K562 (cell line): ENCODE measurements at regions of chr6 and their contacts with region 1.

Region 1: DNA sequence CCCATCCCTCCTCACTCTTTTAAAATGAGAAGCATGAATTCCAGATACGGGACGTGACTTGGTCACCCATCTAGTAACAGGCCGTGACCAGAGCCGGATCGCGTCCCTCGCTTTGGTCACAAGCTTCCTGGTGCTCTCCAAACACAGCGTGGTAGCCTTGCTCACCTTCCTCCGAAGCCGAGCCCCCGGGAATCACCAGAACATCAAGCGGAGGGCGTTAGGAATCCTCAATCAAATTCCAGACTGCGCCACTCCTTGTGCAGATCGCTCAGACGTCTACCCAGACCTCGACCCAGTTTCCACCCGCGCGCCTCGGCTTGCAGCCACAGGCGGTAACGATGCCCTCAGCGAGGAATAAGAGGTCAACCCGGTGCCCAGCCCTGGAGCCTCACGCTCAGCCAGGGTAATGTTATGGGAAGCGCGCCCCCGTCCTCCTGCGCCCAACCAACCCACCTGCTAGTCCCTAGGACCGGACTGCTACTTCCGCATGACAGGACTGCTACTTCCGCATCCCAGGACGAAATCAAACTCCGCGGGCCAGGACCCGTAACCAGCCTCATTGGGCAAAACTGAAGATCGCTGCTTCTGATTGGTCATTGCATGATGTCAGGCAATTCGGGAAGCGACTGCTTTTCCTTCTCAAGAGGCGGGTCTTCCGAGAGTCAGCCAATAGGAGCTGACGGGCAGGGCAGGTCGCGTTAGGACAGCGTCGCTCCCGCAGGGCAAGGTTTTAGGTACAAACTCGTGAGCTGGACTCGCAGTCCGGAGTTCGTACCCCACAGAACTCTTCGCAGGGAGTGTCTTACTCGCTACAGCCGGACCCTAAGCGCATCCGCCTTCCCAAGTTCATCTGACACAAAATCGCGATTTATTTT is at the start of gene MTFR2:
- DNase-seq: peak; percentile 100
- ATAC-seq: peak; percentile 93
- H3K4me3 ChIP-seq: peak within 1 kb of the TSS; percentile 88
- H3K27ac ChIP-seq: peak within 1 kb of the TSS; percentile 82
- H3K4me1 ChIP-seq: peaks cover 0 to 20% of the 10 kb centered on the region in 2 experiments; a peak in 2 of 5 replicates
- H3K27me3 ChIP-seq: no peaks in the 10 kb centered on the region
- CTCF ChIP-seq: no peak
- EP300 ChIP-seq: peak; percentile 45
- POLR2A ChIP-seq: peak; percentile 93
- RAD21 ChIP-seq: 0 out of 4 replicates have a peak, but pooled peaks have one; percentile 9 to 12
- polyA plus RNA-seq, gene MTFR2: 45.9 to 49.7 TPM

Region 2: DNA sequence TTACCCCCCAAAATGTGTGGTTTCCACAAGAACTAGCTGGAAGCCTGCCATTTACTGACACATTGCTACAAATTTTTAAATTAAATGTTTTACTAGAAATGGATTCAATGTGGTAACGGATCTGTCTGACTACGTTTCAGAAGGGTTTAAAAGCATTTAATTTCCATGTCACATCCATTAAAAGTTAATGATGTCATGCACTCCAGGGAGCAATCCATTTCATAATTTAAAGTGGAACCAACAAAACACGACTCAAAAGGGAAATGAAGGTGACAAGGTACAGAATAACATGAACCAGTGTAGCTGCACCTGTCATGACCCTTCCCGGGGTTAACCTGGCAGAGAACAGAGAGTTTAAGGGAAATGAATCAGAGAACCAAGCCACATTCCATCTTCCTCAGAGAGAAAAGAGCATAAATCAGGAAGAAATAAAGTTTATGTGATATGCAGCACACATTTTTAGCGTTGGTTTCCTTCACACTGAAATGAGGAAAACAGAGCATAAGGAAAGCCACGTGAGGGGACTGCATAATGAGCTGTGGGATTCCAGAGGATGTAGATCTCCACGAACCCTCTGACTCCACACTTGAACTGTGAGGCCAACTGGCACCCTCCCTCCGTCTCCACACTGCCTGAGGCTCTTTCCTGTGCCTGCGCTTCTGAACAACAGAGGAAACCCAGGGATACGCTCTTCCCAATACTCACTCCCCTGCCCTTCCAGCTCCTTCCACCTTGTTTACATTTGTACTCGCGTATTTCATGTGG is 582.2 kb before region 1 on chr6:
- CTCF ChIA-PET with region 1: no interaction called
- POLR2A ChIA-PET with region 1: no interaction called
- in situ Hi-C with region 1: no loop called
- intact Hi-C with region 1: no loop called
- DNase-seq: no peak
- ATAC-seq: no peak
- H3K4me3 ChIP-seq: no peak overlapping the region
- H3K27ac ChIP-seq: no peak overlapping the region
- H3K4me1 ChIP-seq: no peaks in the 10 kb centered on the region
- H3K27me3 ChIP-seq: peaks cover 0 to 4% of the 10 kb centered on the region in 2 experiments; a peak in 1 of 5 replicates
- CTCF ChIP-seq: no peak
- EP300 ChIP-seq: no peak
- POLR2A ChIP-seq: no peak
- RAD21 ChIP-seq: no peak

Region 3: DNA sequence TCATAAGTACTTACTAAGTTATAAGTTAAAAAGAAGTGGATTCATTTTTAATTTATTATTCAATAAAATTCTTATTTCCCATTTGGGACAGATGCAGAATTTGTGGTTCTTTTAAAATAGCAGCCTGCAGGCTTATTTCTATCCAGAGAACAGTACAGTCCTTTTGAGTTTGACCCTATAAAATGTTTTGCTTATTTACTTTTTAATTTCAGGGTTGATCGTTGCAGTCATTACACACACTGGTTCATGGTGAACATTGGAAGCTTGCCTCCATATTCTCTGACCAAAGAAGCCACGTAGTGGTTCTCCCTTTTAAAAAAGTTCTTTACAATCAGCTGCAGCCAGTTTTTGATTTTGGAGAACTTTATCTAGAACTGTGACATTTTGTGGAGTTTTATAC is 521.5 kb before region 1 on chr6:
- CTCF ChIA-PET with region 1: no interaction called
- POLR2A ChIA-PET with region 1: no interaction called
- in situ Hi-C with region 1: no loop called
- intact Hi-C with region 1: no loop called
- DNase-seq: no peak
- ATAC-seq: no peak
- H3K4me3 ChIP-seq: no peak overlapping the region
- H3K27ac ChIP-seq: no peak overlapping the region
- H3K4me1 ChIP-seq: no peaks in the 10 kb centered on the region
- H3K27me3 ChIP-seq: no peaks in the 10 kb centered on the region
- CTCF ChIP-seq: no peak
- EP300 ChIP-seq: no peak
- POLR2A ChIP-seq: no peak
- RAD21 ChIP-seq: no peak

Region 4: DNA sequence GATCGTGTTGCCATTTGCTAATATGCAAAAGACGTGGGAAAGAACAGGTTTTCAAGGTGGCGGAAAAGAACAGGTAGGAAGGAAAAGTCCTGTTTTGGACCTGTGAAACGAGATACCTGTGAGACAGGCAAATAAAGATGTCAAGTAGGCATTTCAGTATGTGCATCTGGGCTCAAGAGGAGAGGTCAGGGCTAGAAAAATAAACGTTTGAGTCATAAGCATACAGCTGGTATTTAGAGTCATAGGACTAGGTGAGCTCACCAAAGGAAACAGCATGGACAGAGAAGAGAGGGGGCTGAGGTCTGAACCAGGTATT is 14.9 kb before region 1 on chr6:
- CTCF ChIA-PET with region 1: no interaction called
- POLR2A ChIA-PET with region 1: interaction called, 54 read pairs
- in situ Hi-C with region 1: no loop called
- intact Hi-C with region 1: loop called (anchors 1 kb)
- DNase-seq: no peak
- ATAC-seq: no peak
- H3K4me3 ChIP-seq: no peak overlapping the region
- H3K27ac ChIP-seq: peak overlapping the region; percentile 10; the same call in 1 of the 3 replicates
- H3K4me1 ChIP-seq: peaks cover 17 to 37% of the 10 kb centered on the region in 2 experiments
- H3K27me3 ChIP-seq: no peaks in the 10 kb centered on the region
- CTCF ChIP-seq: no peak
- EP300 ChIP-seq: no peak
- POLR2A ChIP-seq: no peak
- RAD21 ChIP-seq: no peak

Region 5: GRCh38 chr6:136262940-136263339 is 12.9 kb after region 1 on chr6:
- CTCF ChIA-PET with region 1: no interaction called
- POLR2A ChIA-PET with region 1: interaction called, 19 read pairs
- in situ Hi-C with region 1: no loop called
- intact Hi-C with region 1: no loop called
- DNase-seq: no peak
- ATAC-seq: no peak; the same call in 2 of the 3 replicates
- H3K4me3 ChIP-seq: no peak overlapping the region
- H3K27ac ChIP-seq: no peak overlapping the region
- H3K4me1 ChIP-seq: no peaks in the 10 kb centered on the region
- H3K27me3 ChIP-seq: no peaks in the 10 kb centered on the region
- CTCF ChIP-seq: no peak
- EP300 ChIP-seq: no peak
- POLR2A ChIP-seq: no peak
- RAD21 ChIP-seq: no peak

Region 6: DNA sequence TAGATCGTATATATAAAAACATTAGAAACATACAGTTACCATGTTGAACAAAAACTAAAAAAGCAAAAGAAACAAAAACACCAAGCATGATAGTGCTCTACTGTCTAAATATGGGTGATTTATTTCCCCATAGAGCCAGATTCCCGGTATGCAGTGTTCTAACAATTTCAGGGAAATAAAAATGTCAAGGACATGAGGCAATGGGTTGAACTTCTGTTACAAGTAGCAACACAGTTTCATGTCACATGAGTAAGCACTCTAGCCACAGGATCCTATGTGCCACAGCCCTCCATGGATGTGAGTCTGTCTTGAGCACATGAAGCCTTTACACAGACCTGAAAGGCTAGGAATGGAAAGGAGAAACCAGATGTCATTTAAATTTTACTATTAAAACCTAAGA is 446.2 kb after region 1 on chr6:
- CTCF ChIA-PET with region 1: no interaction called
- POLR2A ChIA-PET with region 1: no interaction called
- in situ Hi-C with region 1: no loop called
- intact Hi-C with region 1: no loop called
- DNase-seq: no peak
- ATAC-seq: peak; percentile 42; the same call in 1 of the 3 replicates
- H3K4me3 ChIP-seq: no peak overlapping the region
- H3K27ac ChIP-seq: no peak overlapping the region
- H3K4me1 ChIP-seq: no peaks in the 10 kb centered on the region
- H3K27me3 ChIP-seq: no peaks in the 10 kb centered on the region; a peak in 1 of 5 replicates
- CTCF ChIP-seq: no peak
- EP300 ChIP-seq: no peak
- POLR2A ChIP-seq: no peak
- RAD21 ChIP-seq: no peak